HepG2 (cell line): ENCODE measurements at regions of chr1 and their contacts with region 1.

Region 1: DNA sequence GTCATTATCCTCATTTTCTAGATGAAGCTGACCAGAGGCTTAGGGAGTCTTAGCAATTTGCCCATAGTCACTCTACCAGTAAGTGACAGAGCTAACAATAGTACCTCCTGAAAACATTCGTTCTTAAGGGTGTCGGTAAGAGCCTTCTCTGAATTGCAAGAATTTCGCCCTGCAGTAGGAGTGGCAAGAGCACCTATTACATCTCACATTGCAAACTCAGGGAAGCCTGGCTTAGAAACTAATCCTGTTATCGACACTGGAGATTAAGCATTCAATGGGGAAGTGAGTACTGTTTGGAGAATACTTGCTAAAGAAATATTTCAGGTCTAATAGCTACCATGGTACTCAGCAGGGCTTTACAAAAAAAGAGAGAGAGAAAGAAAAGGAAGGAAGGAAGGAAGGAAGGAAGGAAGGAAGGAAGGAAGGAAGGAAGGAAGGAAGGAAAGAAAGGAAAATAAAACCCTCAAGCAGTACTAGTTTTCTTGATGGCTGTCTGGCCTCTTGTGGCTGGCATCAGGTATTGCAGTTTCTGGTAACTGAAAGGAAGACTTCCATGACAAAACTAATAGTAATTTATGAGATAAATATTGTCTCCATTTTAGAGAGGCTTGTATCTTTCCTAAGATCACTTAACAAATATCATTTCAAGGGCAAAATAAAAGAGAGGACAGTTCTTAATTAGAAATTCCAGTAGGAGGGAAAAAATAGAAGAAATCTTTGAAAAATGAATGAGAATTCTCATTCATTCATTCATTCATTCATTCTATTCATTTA is 10.4 kb downstream of the C1orf226 start:
- DNase-seq: peak; percentile 28
- ATAC-seq: 0 out of 3 replicates have a peak, but pooled peaks have one; percentile 18
- H3K4me3 ChIP-seq: no peak overlapping the region
- H3K27ac ChIP-seq: no peak overlapping the region
- H3K4me1 ChIP-seq: peaks cover 21% of the 10 kb centered on the region
- H3K27me3 ChIP-seq: no peaks in the 10 kb centered on the region
- CTCF ChIP-seq: peak; percentile 79
- EP300 ChIP-seq: no peak
- POLR2A ChIP-seq: no peak
- RAD21 ChIP-seq: peak; percentile 19; the same call in 1 of the 2 replicates

Region 2: DNA sequence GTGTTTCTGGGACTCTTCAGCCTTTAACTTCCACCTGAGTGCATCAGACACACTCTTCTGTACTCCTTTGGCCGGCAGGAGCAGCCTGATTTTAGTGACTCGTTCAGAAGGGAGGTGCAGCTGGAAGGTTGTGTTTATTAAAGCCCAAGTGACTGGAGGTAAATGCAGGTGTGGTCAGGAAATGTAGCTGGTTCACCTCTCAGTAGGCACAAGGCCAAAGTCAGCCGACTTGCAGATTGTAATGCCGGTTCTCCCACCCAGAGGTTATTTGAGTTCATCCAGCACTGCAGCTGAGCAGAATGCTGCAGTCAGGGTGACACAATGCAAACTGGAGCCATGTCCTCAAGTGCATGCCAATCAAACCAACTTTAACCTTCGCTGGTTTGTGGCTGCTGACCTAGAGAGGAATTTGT is 106.8 kb before region 1 on chr1:
- CTCF ChIA-PET with region 1: no interaction called
- POLR2A ChIA-PET with region 1: no interaction called
- in situ Hi-C with region 1: no loop called
- intact Hi-C with region 1: loop called (anchors 10 kb)
- DNase-seq: peak; percentile 72
- ATAC-seq: peak; percentile 91
- H3K4me3 ChIP-seq: no peak overlapping the region
- H3K27ac ChIP-seq: no peak overlapping the region
- H3K4me1 ChIP-seq: peaks cover 16% of the 10 kb centered on the region
- H3K27me3 ChIP-seq: no peaks in the 10 kb centered on the region
- CTCF ChIP-seq: 0 out of 2 replicates have a peak, but pooled peaks have one; percentile 9
- EP300 ChIP-seq: no peak
- POLR2A ChIP-seq: no peak
- RAD21 ChIP-seq: no peak